ENCODE measurements at regions of chr4 and their contacts with region 1.

Region 1: DNA sequence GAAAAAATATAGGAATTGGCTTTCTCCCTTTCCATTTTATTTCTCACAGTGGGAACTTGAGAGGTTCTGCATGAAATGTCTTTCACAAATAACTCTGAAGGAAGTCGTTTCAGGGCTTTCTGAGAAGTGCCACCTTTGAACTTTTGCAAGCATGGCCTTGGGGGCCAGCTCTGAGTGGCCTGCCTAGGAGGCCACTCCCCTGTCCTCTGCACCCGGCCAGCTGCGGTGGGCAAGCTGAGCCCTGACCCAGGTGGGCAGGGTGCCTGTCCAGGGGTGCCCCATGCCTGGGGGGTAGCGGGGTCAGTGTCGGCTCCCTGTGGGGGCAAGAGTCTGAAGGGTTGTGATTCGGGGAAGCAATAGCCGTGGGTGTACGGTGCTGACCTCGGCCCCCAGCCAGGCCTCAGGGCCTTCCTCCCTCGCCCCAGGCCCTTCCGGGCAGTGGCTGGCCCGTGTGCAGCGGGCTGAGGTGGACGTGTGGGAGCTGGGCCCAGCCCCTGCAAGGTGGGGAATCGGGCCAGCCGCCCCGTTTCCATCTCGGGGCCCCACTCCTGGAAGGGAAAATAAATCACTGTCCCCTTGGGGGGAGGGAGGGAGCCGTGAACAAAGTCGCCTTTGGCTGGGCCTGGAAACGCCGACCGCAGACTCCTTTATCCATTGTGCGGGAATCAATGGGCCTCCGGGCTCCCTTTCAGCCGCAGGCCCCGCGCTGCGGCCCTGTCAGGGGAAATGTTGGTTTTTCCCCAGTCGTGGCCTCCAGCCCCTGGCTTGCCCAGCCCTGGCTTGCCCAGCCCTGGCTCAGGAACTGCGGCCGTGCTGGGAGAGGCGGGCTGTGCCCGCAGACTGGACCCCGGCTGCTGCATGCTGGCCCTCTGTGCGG is 3.1 kb downstream of the FGFRL1 start:
- DNase-seq: peak in 9 of 10 donors; percentile 71 to 96 (median 78)

Region 2: DNA sequence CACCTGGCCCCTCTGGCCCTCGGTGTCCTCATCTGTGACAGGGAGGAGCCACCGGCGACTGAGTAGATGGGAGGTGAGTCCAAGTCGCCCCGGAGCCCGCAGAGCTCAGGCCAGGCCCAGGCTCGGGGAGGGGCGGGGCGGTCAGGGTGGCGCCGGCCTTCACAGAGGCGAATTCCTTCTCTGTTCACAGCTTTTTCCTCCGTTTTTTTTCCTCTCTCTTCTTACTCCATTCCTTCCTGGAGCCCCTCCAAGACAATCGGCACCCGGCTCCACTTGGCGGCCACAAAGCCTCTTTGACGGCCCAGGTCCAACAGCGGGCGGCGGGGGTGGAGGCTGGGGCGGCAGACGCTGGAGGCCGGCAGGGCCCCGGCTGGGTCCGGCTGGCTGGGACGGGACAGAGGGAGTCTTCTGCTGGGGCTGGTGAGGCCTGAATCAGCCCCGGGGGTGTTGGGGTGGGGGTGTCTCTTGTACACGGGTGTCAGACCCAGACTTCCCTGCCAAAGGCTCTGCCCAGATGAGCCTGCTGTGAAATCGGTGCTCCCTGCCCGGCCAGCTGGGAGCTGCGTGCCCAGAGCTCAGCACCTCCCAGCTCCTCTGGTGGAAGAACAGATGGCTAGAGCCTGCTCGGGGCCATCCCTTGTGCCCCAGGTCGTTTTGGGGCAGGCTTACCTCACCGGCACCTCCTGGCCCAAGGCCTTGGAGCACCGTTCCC is 19.5 kb after region 1 on chr4:
- intact Hi-C with region 1: loop called (anchors 1 kb)
- DNase-seq: peak in 9 of 10 donors; percentile 35 to 94 (median 70)

Measured in posterior cingulate gyrus (tissue), 11 donors.